ENCODE measurements at regions of chr5 and their contacts with region 1.

Region 1: GRCh38 chr5:56056875-56057274 is 62.1 kb upstream of the IL6ST start:
- DNase-seq: peak; percentile 85
- ATAC-seq: peak; percentile 78
- H3K4me3 ChIP-seq: 0 out of 2 replicates have a peak overlapping the region, but pooled peaks have one; percentile 8
- H3K27ac ChIP-seq: peak overlapping the region; percentile 47; the same call in 1 of the 2 replicates
- H3K4me1 ChIP-seq: peaks cover 41% of the 10 kb centered on the region
- H3K27me3 ChIP-seq: no peaks in the 10 kb centered on the region
- CTCF ChIP-seq: no peak
- EP300 ChIP-seq: peak in 1 of 2 experiments; percentile 48; a peak in 1 of 4 replicates
- POLR2A ChIP-seq: no peak
- RAD21 ChIP-seq: no peak

Region 2: GRCh38 chr5:55982957-55983381 is 73.9 kb before region 1 on chr5:
- CTCF ChIA-PET with region 1: interaction called, 6 read pairs
- POLR2A ChIA-PET with region 1: no interaction called
- RAD21 ChIA-PET with region 1: interaction called, 14 read pairs
- SMC1A ChIA-PET with region 1: interaction called, 11 read pairs
- in situ Hi-C with region 1: no loop called
- intact Hi-C with region 1: no loop called
- DNase-seq: no peak
- ATAC-seq: peak; percentile 28
- H3K4me3 ChIP-seq: no peak overlapping the region
- H3K27ac ChIP-seq: no peak overlapping the region
- H3K4me1 ChIP-seq: peaks cover 1% of the 10 kb centered on the region
- H3K27me3 ChIP-seq: no peaks in the 10 kb centered on the region
- CTCF ChIP-seq: peak in 2 of 3 experiments; percentile 14 to 50; a peak in 3 of 6 replicates
- EP300 ChIP-seq: no peak
- POLR2A ChIP-seq: no peak
- RAD21 ChIP-seq: peak; percentile 38

Region 3: GRCh38 chr5:56037531-56038010 is 19.3 kb before region 1 on chr5:
- CTCF ChIA-PET with region 1: interaction called, 5 read pairs
- POLR2A ChIA-PET with region 1: no interaction called
- RAD21 ChIA-PET with region 1: no interaction called
- SMC1A ChIA-PET with region 1: interaction called, 12 read pairs
- in situ Hi-C with region 1: no loop called
- intact Hi-C with region 1: no loop called
- DNase-seq: no peak
- ATAC-seq: peak; percentile 89
- H3K4me3 ChIP-seq: no peak overlapping the region
- H3K27ac ChIP-seq: no peak overlapping the region
- H3K4me1 ChIP-seq: no peaks in the 10 kb centered on the region
- H3K27me3 ChIP-seq: no peaks in the 10 kb centered on the region
- CTCF ChIP-seq: no peak
- EP300 ChIP-seq: no peak
- POLR2A ChIP-seq: no peak
- RAD21 ChIP-seq: no peak

Region 4: GRCh38 chr5:56080375-56081052 is 23.6 kb after region 1 on chr5:
- CTCF ChIA-PET with region 1: interaction called, 8 read pairs
- POLR2A ChIA-PET with region 1: interaction called, 4 read pairs
- RAD21 ChIA-PET with region 1: interaction called, 52 read pairs
- SMC1A ChIA-PET with region 1: interaction called, 68 read pairs
- in situ Hi-C with region 1: no loop called
- intact Hi-C with region 1: loop called (anchors 1 kb)
- DNase-seq: peak; percentile 98
- ATAC-seq: peak; percentile 82
- H3K4me3 ChIP-seq: no peak overlapping the region
- H3K27ac ChIP-seq: peak overlapping the region; percentile 84
- H3K4me1 ChIP-seq: peaks cover 21% of the 10 kb centered on the region
- H3K27me3 ChIP-seq: no peaks in the 10 kb centered on the region
- CTCF ChIP-seq: no peak
- EP300 ChIP-seq: peak; percentile 83 to 87
- POLR2A ChIP-seq: no peak
- RAD21 ChIP-seq: no peak

Region 5: DNA sequence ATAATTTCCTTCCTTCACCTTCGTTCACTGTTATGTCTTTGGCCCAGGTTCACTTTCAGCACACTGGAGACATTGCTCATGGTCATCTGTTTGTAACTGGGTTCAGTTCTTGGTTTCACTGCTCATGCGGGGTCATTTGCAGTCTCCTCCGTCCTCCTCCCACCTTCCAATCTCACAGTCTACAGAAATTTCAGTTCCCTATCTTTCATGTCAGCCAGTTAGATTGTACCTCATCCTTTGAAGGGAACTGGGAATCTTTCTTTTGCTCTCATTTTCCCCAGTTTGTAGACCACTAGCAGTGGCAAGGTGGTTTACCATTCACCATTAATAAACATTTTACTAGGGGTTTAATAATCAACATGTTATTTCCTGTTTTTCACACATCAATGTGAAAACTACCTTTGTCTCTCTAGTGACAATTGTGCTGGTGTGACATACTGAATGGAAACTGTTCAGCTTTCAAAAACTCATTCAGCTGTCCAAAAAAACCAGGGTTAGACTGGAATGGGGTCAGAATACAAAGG is 38.8 kb after region 1 on chr5:
- CTCF ChIA-PET with region 1: interaction called, 5 read pairs
- POLR2A ChIA-PET with region 1: interaction called, 18 read pairs
- RAD21 ChIA-PET with region 1: interaction called, 45 read pairs
- SMC1A ChIA-PET with region 1: interaction called, 49 read pairs
- in situ Hi-C with region 1: no loop called
- intact Hi-C with region 1: loop called (anchors 2 kb)
- DNase-seq: peak; percentile 96
- ATAC-seq: peak; percentile 87
- H3K4me3 ChIP-seq: no peak overlapping the region
- H3K27ac ChIP-seq: peak overlapping the region; percentile 76
- H3K4me1 ChIP-seq: peaks cover 21% of the 10 kb centered on the region
- H3K27me3 ChIP-seq: no peaks in the 10 kb centered on the region
- CTCF ChIP-seq: no peak
- EP300 ChIP-seq: peak; percentile 79 to 90
- POLR2A ChIP-seq: no peak
- RAD21 ChIP-seq: no peak

Measured in GM12878 (cell line).